Activated T-helper 1 cell treated with anti-CD3 and anti-CD28 coated beads, Interleukin-12 subunit alpha, Interleukin-12 subunit beta, Interleukin-2, Interleukin-4 antibody, amounts not matched to agents 30 ng/mL and 10 ng/mL and 1 ng/mL, durations not matched to agents 14 hours and 24 hours and 36 hours (primary cell): ENCODE measurements at regions of chr12 and their contacts with region 1.

Region 1: GRCh38 chr12:110015132-110015531 is 15.9 kb downstream of the ANKRD13A start:
- DNase-seq: no peak
- H3K4me3 Mint-ChIP-seq: peak overlapping the region; percentile 53
- H3K27ac Mint-ChIP-seq: peak overlapping the region; percentile 90
- H3K4me1 Mint-ChIP-seq: peaks cover 44% of the 10 kb centered on the region
- H3K27me3 Mint-ChIP-seq: no peaks in the 10 kb centered on the region

Region 2: GRCh38 chr12:109934026-109934425 is 81.1 kb before region 1 on chr12:
- intact Hi-C with region 1: loop called (anchors 1 kb)
- DNase-seq: no peak
- H3K4me3 Mint-ChIP-seq: no peak overlapping the region
- H3K27ac Mint-ChIP-seq: no peak overlapping the region
- H3K4me1 Mint-ChIP-seq: no peaks in the 10 kb centered on the region
- H3K27me3 Mint-ChIP-seq: no peaks in the 10 kb centered on the region

Region 3: DNA sequence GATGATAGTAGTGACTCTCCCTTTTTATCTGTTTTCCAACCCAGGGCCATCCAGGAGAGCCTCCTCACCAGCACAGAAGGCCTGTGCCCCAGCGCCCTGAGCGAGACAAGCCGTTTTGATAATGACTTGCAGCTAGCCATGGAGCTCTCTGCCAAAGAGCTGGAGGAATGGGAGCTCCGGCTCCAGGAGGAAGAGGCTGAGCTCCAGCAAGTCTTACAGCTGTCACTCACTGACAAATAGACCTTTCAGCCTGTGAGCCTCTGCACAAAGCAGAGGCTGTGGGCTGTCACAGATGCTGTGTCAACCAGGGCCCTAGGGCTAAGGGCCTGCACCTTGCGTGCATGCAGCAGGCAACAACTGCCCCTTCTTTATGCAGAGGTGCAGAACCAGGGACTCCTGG is 22.2 kb after region 1 on chr12:
- intact Hi-C with region 1: no loop called
- DNase-seq: no peak
- H3K4me3 Mint-ChIP-seq: no peak overlapping the region
- H3K27ac Mint-ChIP-seq: no peak overlapping the region
- H3K4me1 Mint-ChIP-seq: peaks cover 54% of the 10 kb centered on the region
- H3K27me3 Mint-ChIP-seq: no peaks in the 10 kb centered on the region

Region 4: DNA sequence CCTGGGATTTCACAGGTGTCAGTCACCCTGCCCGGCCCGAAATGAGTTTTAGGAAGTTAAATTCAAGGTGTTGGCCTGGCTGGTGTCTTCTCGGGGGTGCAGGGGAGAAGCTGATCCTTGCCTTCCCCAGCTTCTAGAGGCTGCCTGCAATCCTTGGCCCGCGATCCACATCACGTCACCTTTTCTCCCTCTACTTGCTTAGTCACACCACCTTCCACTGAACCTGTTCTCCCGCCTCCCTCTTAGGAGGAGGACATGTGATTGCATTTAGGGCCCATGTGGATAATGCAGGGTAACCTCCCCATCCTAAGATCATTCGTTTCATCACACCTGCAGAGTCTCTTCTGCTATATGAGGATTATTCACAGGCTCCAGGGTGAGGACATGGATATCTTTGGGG is 1609.4 kb after region 1 on chr12:
- intact Hi-C with region 1: no loop called
- DNase-seq: no peak
- H3K4me3 Mint-ChIP-seq: no peak overlapping the region
- H3K27ac Mint-ChIP-seq: no peak overlapping the region
- H3K4me1 Mint-ChIP-seq: no peaks in the 10 kb centered on the region
- H3K27me3 Mint-ChIP-seq: peaks cover 5% of the 10 kb centered on the region